ENCODE measurements at regions of chr2 and their contacts with region 1.

Region 1: GRCh38 chr2:171811245-171811628 is 82.8 kb downstream of the SLC25A12 start:
- DNase-seq: no peak
- ATAC-seq: peak; percentile 53 to 56
- H3K4me3 ChIP-seq: no peak overlapping the region
- H3K27ac ChIP-seq: peak overlapping the region in 2 of 4 donors; percentile 1 to 31
- H3K4me1 ChIP-seq: peaks cover 0 to 35% of the 10 kb centered on the region in 2 donors
- H3K27me3 ChIP-seq: no peaks in the 10 kb centered on the region
- CTCF ChIP-seq: peak in 4 of 5 experiments; percentile 21 to 40 (median 28)
- POLR2A ChIP-seq: no peak

Region 2: GRCh38 chr2:171615069-171615468 is 196.2 kb before region 1 on chr2:
- in situ Hi-C with region 1: no loop called
- intact Hi-C with region 1: no loop called
- DNase-seq: no peak
- ATAC-seq: no peak
- H3K4me3 ChIP-seq: no peak overlapping the region
- H3K27ac ChIP-seq: no peak overlapping the region
- H3K4me1 ChIP-seq: no peaks in the 10 kb centered on the region
- H3K27me3 ChIP-seq: no peaks in the 10 kb centered on the region
- CTCF ChIP-seq: no peak
- POLR2A ChIP-seq: no peak

Region 3: GRCh38 chr2:171957061-171957460 is 145.8 kb after region 1 on chr2:
- in situ Hi-C with region 1: no loop called
- intact Hi-C with region 1: loop called (anchors 10 kb)
- DNase-seq: no peak
- ATAC-seq: no peak
- H3K4me3 ChIP-seq: no peak overlapping the region
- H3K27ac ChIP-seq: peak overlapping the region in 2 of 4 donors; percentile 12 to 44
- H3K4me1 ChIP-seq: peaks cover 47 to 62% of the 10 kb centered on the region in 2 donors
- H3K27me3 ChIP-seq: no peaks in the 10 kb centered on the region
- CTCF ChIP-seq: no peak
- POLR2A ChIP-seq: no peak

Region 4: GRCh38 chr2:172084734-172085459 is 273.7 kb after region 1 on chr2:
- in situ Hi-C with region 1: loop called in 1 of 4 experiments (anchors 25 kb)
- intact Hi-C with region 1: no loop called
- DNase-seq: peak; percentile 50 to 68
- ATAC-seq: peak; percentile 79 to 88
- H3K4me3 ChIP-seq: peak overlapping the region; percentile 46 to 54 (median 53)
- H3K27ac ChIP-seq: no peak overlapping the region
- H3K4me1 ChIP-seq: peaks cover 40 to 43% of the 10 kb centered on the region in 2 donors
- H3K27me3 ChIP-seq: peaks cover 96 to 99% (median 98%) of the 10 kb centered on the region in 3 donors
- CTCF ChIP-seq: no peak
- POLR2A ChIP-seq: peak; percentile 12 to 19

Region 5: DNA sequence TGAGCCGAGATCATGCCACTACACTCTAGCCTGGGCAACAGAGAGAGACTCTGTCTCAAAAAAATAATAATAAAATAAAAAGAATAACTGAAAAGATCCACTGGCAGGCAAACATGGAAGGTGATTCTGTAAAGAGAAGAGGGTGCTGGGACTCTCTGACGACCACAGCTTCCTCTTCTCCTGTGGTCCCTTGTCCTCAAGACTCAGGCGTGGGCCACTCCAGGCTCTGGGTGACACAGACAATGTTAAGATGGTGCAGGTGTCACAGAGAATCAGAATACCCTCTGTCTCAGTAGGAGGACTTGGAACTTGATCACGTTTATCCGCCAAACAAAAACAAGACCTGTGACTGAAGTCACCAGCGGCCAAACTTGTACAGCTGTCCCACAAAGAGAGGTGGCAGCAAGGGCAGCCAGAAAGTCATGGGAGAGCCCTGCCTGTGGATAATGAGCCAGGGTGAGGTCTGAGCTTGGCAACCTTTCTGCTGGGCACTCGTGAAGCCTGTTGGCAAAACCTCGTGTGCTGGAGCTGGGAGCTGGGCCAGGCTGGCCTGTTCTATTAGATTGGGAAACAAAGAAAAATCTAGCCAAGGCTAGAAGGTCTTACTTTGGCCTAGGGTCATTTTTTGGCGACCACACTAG is 539.7 kb after region 1 on chr2:
- in situ Hi-C with region 1: no loop called
- intact Hi-C with region 1: no loop called
- DNase-seq: peak; percentile 89 to 94
- ATAC-seq: peak; percentile 99
- H3K4me3 ChIP-seq: no peak overlapping the region
- H3K27ac ChIP-seq: peak overlapping the region; percentile 75 to 87 (median 76)
- H3K4me1 ChIP-seq: peaks cover 11 to 24% of the 10 kb centered on the region in 2 donors
- H3K27me3 ChIP-seq: no peaks in the 10 kb centered on the region
- CTCF ChIP-seq: no peak
- POLR2A ChIP-seq: no peak

Measured in gastrocnemius medialis (tissue), 4 donors.